GM12878 (cell line): ENCODE measurements at regions of chr7 and their contacts with region 1.

Region 1: GRCh38 chr7:129401967-129402860 is 32.0 kb upstream of the STRIP2 start:
- DNase-seq: peak; percentile 43
- ATAC-seq: peak; percentile 93
- H3K4me3 ChIP-seq: no peak overlapping the region
- H3K27ac ChIP-seq: peak overlapping the region; percentile 18; the same call in 1 of the 2 replicates
- H3K4me1 ChIP-seq: no peaks in the 10 kb centered on the region
- H3K27me3 ChIP-seq: no peaks in the 10 kb centered on the region
- CTCF ChIP-seq: peak; percentile 34 to 64 (median 37); a peak in 4 of 6 replicates
- EP300 ChIP-seq: peak; percentile 29 to 59; a peak in 2 of 4 replicates
- POLR2A ChIP-seq: no peak
- RAD21 ChIP-seq: peak; percentile 46

Region 2: GRCh38 chr7:129327076-129327475 is 75.1 kb before region 1 on chr7:
- CTCF ChIA-PET with region 1: no interaction called
- POLR2A ChIA-PET with region 1: no interaction called
- RAD21 ChIA-PET with region 1: no interaction called
- SMC1A ChIA-PET with region 1: no interaction called
- in situ Hi-C with region 1: no loop called
- intact Hi-C with region 1: no loop called
- DNase-seq: no peak
- ATAC-seq: no peak
- H3K4me3 ChIP-seq: no peak overlapping the region
- H3K27ac ChIP-seq: no peak overlapping the region
- H3K4me1 ChIP-seq: no peaks in the 10 kb centered on the region
- H3K27me3 ChIP-seq: no peaks in the 10 kb centered on the region
- CTCF ChIP-seq: no peak
- EP300 ChIP-seq: no peak
- POLR2A ChIP-seq: no peak
- RAD21 ChIP-seq: no peak

Region 3: GRCh38 chr7:129381710-129382484 is 20.3 kb before region 1 on chr7:
- CTCF ChIA-PET with region 1: interaction called, 39 read pairs
- POLR2A ChIA-PET with region 1: interaction called, 4 read pairs
- RAD21 ChIA-PET with region 1: interaction called, 36 read pairs
- SMC1A ChIA-PET with region 1: interaction called, 27 read pairs
- in situ Hi-C with region 1: no loop called
- intact Hi-C with region 1: no loop called
- DNase-seq: no peak
- ATAC-seq: peak; percentile 27; the same call in 1 of the 3 replicates
- H3K4me3 ChIP-seq: no peak overlapping the region
- H3K27ac ChIP-seq: no peak overlapping the region
- H3K4me1 ChIP-seq: peaks cover 6% of the 10 kb centered on the region
- H3K27me3 ChIP-seq: no peaks in the 10 kb centered on the region
- CTCF ChIP-seq: no peak
- EP300 ChIP-seq: no peak
- POLR2A ChIP-seq: no peak
- RAD21 ChIP-seq: no peak

Region 4: GRCh38 chr7:129389829-129390228 is 12.4 kb before region 1 on chr7:
- CTCF ChIA-PET with region 1: interaction called, 30 read pairs
- POLR2A ChIA-PET with region 1: interaction called, 3 read pairs
- RAD21 ChIA-PET with region 1: interaction called, 9 read pairs
- SMC1A ChIA-PET with region 1: interaction called, 9 read pairs
- in situ Hi-C with region 1: no loop called
- intact Hi-C with region 1: no loop called
- DNase-seq: no peak
- ATAC-seq: no peak
- H3K4me3 ChIP-seq: no peak overlapping the region
- H3K27ac ChIP-seq: no peak overlapping the region
- H3K4me1 ChIP-seq: no peaks in the 10 kb centered on the region; the same call in 1 of the 2 replicates
- H3K27me3 ChIP-seq: no peaks in the 10 kb centered on the region
- CTCF ChIP-seq: no peak
- EP300 ChIP-seq: no peak
- POLR2A ChIP-seq: no peak
- RAD21 ChIP-seq: no peak

Region 5: GRCh38 chr7:129433847-129434674 is 31.8 kb after region 1 on chr7 and contains the start of gene STRIP2:
- CTCF ChIA-PET with region 1: interaction called, 9 read pairs
- POLR2A ChIA-PET with region 1: interaction called, 6 read pairs
- RAD21 ChIA-PET with region 1: interaction called, 19 read pairs
- SMC1A ChIA-PET with region 1: interaction called, 8 read pairs
- in situ Hi-C with region 1: no loop called
- intact Hi-C with region 1: no loop called
- DNase-seq: peak; percentile 40
- ATAC-seq: peak; percentile 98
- H3K4me3 ChIP-seq: peak within 1 kb of the TSS; percentile 95
- H3K27ac ChIP-seq: peak within 1 kb of the TSS; percentile 9; the same call in 1 of the 2 replicates
- H3K4me1 ChIP-seq: no peaks in the 10 kb centered on the region
- H3K27me3 ChIP-seq: no peaks in the 10 kb centered on the region
- CTCF ChIP-seq: 0 out of 6 replicates have a peak, but pooled peaks of 1 of the 3 experiments have one; percentile 3
- EP300 ChIP-seq: no peak
- POLR2A ChIP-seq: peak; percentile 83
- RAD21 ChIP-seq: no peak
- polyA plus RNA-seq, gene STRIP2: 0.48 to 0.58 TPM